ENCODE measurements at regions of chr2 and their contacts with region 1.

Region 1: DNA sequence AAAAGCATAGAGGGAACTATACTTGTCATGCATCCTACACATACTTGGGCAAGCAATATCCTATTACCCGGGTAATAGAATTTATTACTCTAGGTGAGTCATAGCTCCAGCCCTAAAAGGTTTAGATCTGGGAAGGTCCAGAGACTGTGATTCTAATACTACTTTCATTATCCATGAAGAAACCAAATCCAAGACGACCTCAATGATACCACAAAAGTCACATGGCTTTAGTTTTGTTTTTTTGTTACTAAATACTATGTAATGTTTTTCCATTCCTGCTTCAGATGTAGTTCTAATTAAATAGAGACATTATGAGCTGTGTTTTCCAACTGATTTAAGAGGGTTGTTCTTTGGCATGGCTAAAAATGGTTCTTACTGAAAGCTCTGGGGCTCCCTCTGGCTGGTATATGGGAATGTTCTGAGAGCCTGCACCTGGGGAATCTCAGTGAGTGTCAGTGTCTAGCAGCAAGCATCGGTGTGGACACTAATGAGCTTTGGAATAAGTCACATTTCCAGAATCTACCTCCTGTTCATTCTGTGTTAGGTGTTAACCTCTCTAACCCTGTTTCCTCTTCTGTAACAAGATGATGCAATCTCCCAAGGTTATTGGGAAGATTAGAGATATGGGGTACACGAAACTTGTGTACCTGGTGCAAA is 20.5 kb upstream of the IL1RL2 start:
- DNase-seq: peak; percentile 66
- H3K4me3 ChIP-seq: no peak overlapping the region
- H3K27ac ChIP-seq: peak overlapping the region; percentile 17
- H3K4me1 ChIP-seq: peaks cover 4% of the 10 kb centered on the region
- H3K27me3 ChIP-seq: no peaks in the 10 kb centered on the region
- CTCF ChIP-seq: peak; percentile 60 to 76

Region 2: GRCh38 chr2:102005989-102006885 is 160.1 kb before region 1 on chr2:
- CTCF ChIA-PET with region 1: interaction called, 4 read pairs
- dilution Hi-C with region 1: no loop called
- in situ Hi-C with region 1: no loop called
- intact Hi-C with region 1: loop called (anchors 1 kb)
- DNase-seq: no peak
- H3K4me3 ChIP-seq: no peak overlapping the region
- H3K27ac ChIP-seq: no peak overlapping the region
- H3K4me1 ChIP-seq: peaks cover 13% of the 10 kb centered on the region
- H3K27me3 ChIP-seq: no peaks in the 10 kb centered on the region
- CTCF ChIP-seq: peak; percentile 70 to 74

Region 3: GRCh38 chr2:102126651-102127050 is 39.7 kb before region 1 on chr2:
- CTCF ChIA-PET with region 1: interaction called, 8 read pairs
- dilution Hi-C with region 1: no loop called
- in situ Hi-C with region 1: no loop called
- intact Hi-C with region 1: loop called (anchors 2 kb)
- DNase-seq: no peak
- H3K4me3 ChIP-seq: no peak overlapping the region
- H3K27ac ChIP-seq: peak overlapping the region; percentile 95
- H3K4me1 ChIP-seq: peaks cover 16% of the 10 kb centered on the region
- H3K27me3 ChIP-seq: no peaks in the 10 kb centered on the region
- CTCF ChIP-seq: no peak